OCI-LY7 (cell line): ENCODE measurements at regions of chr5 and their contacts with region 1.

Region 1: GRCh38 chr5:78162253-78162862 is 132.1 kb downstream of the AP3B1 start:
- DNase-seq: peak; percentile 59
- H3K4me3 ChIP-seq: no peak overlapping the region
- H3K27ac ChIP-seq: no peak overlapping the region
- H3K4me1 ChIP-seq: no peaks in the 10 kb centered on the region
- CTCF ChIP-seq: peak; percentile 91

Region 2: GRCh38 chr5:77560677-77561263 is 601.6 kb before region 1 on chr5:
- CTCF ChIA-PET with region 1: no interaction called
- POLR2A ChIA-PET with region 1: no interaction called
- intact Hi-C with region 1: loop called (anchors 10 kb)
- DNase-seq: peak; percentile 14
- H3K4me3 ChIP-seq: no peak overlapping the region
- H3K27ac ChIP-seq: no peak overlapping the region
- H3K4me1 ChIP-seq: no peaks in the 10 kb centered on the region
- CTCF ChIP-seq: peak; percentile 71

Region 3: GRCh38 chr5:77645158-77645994 is 517.0 kb before region 1 on chr5:
- CTCF ChIA-PET with region 1: no interaction called
- POLR2A ChIA-PET with region 1: no interaction called
- intact Hi-C with region 1: loop called (anchors 5 kb)
- DNase-seq: peak; percentile 33
- H3K4me3 ChIP-seq: no peak overlapping the region
- H3K27ac ChIP-seq: no peak overlapping the region
- H3K4me1 ChIP-seq: no peaks in the 10 kb centered on the region
- CTCF ChIP-seq: peak; percentile 56

Region 4: GRCh38 chr5:78008356-78008967 is 153.9 kb before region 1 on chr5:
- CTCF ChIA-PET with region 1: no interaction called
- POLR2A ChIA-PET with region 1: no interaction called
- intact Hi-C with region 1: loop called (anchors 5 kb)
- DNase-seq: peak; percentile 31
- H3K4me3 ChIP-seq: no peak overlapping the region
- H3K27ac ChIP-seq: no peak overlapping the region
- H3K4me1 ChIP-seq: no peaks in the 10 kb centered on the region
- CTCF ChIP-seq: peak; percentile 89